A673 (cell line): ENCODE measurements at regions of chr7 and their contacts with region 1.

Region 1: DNA sequence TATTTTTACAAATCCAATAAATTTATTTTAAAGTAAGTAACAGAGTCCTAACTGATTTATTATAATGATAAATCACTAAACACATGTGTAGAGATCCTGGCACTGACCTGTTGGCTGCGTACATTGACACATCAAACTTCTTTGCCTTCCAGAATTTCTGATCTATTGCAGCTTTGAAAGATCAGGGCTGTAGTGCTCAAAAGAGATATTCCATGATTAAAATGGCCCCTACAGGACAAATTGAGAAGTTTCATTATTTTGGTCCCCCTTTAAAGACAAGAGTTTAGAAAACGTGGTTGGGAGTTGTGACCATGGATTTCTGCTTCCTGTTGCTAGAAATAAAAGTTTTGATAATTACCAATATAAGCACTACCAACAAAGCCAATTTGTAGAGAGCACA is 87.7 kb upstream of the PDK4 start:
- DNase-seq: peak; percentile 51
- H3K4me3 ChIP-seq: no peak overlapping the region
- H3K27ac ChIP-seq: no peak overlapping the region
- H3K4me1 ChIP-seq: no peaks in the 10 kb centered on the region
- H3K27me3 ChIP-seq: no peaks in the 10 kb centered on the region
- CTCF ChIP-seq: peak; percentile 54

Region 2: DNA sequence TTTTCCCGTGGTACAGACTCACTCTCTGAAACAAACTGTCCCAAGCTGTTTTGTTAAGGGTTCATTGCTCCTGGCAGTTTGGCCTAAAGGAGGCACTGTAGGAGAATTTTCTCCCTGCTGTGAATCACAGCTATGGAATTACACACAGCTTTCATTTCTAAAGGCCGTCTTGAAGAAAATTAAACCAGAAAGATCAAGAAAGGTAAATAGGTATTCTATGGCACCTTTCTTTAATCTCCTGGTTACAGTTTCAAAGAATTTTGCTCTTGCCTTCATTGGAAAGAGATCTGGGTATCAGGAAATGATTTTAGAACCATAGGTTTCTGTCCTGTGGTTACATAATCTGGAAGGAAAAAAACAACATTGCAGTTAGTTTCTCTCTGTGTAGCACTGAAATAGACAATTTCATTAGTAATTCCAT is 138.9 kb before region 1 on chr7:
- CTCF ChIA-PET with region 1: interaction called, 10 read pairs
- POLR2A ChIA-PET with region 1: no interaction called
- intact Hi-C with region 1: no loop called
- DNase-seq: peak; percentile 39
- H3K4me3 ChIP-seq: no peak overlapping the region
- H3K27ac ChIP-seq: no peak overlapping the region
- H3K4me1 ChIP-seq: peaks cover 5% of the 10 kb centered on the region
- H3K27me3 ChIP-seq: peaks cover 11% of the 10 kb centered on the region
- CTCF ChIP-seq: peak; percentile 61